CD8-positive, alpha-beta T cell (primary cell): ENCODE measurements at regions of chr3 and their contacts with region 1.

Region 1: GRCh38 chr3:22450786-22451400 is 699.9 kb upstream of the ZNF385D start:
- DNase-seq: no peak
- ATAC-seq: no peak
- H3K4me3 ChIP-seq: no peak overlapping the region
- H3K4me3 Mint-ChIP-seq: no peak overlapping the region
- H3K27ac ChIP-seq: no peak overlapping the region
- H3K27ac Mint-ChIP-seq: no peak overlapping the region
- H3K4me1 ChIP-seq: no peaks in the 10 kb centered on the region
- H3K4me1 Mint-ChIP-seq: no peaks in the 10 kb centered on the region
- H3K27me3 ChIP-seq: no peaks in the 10 kb centered on the region
- H3K27me3 Mint-ChIP-seq: no peaks in the 10 kb centered on the region
- CTCF ChIP-seq: no peak

Region 2: GRCh38 chr3:22495791-22496190 is 44.9 kb after region 1 on chr3:
- CTCF ChIA-PET with region 1: no interaction called
- POLR2A ChIA-PET with region 1: no interaction called
- intact Hi-C with region 1: loop called in 1 of 2 experiments (anchors 1 kb)
- DNase-seq: no peak
- ATAC-seq: no peak
- H3K4me3 ChIP-seq: no peak overlapping the region
- H3K4me3 Mint-ChIP-seq: no peak overlapping the region
- H3K27ac ChIP-seq: no peak overlapping the region
- H3K27ac Mint-ChIP-seq: no peak overlapping the region
- H3K4me1 ChIP-seq: no peaks in the 10 kb centered on the region
- H3K4me1 Mint-ChIP-seq: no peaks in the 10 kb centered on the region
- H3K27me3 ChIP-seq: no peaks in the 10 kb centered on the region
- H3K27me3 Mint-ChIP-seq: no peaks in the 10 kb centered on the region
- CTCF ChIP-seq: no peak